K562 (cell line): ENCODE measurements at regions of chr1 and their contacts with region 1.

Region 1: DNA sequence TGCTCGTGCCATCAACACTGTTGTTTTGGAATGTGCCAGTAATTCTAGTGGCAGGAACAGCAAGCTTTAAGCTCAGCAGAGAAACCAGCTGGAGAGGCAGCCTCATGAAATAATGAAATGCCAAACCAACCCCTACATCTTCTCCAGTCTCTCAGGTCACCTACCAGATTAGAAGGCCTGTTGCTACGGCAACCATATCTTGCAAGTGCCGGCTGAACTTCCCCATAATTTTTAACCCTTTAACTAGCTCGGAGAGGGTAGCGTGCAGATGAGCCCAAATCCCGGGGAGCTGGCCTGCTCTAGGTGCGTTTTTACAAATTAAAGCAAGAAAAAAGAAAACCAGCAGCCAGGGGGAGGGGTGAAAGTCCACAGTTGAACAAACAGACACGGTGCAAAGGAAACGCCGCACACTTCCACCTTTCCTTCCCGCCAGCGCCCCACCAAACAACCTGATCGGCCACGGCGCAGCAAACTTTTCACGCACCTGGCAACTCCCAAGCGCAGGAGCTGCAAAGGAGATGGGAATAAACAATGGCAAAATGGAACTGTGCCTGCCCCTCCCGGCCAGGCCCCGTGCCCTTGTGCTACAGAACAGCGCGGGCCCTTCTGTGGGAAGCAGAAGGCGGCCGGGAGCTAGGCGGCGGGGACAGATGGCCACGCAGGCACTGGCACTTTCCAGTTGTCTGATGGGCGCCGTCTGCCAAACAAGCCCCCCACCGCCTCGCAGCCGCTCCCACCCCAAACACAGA is 50.1 kb downstream of the SSBP3 start:
- DNase-seq: peak in 3 of 4 experiments; percentile 54 to 90 (median 79)
- ATAC-seq: peak; percentile 84
- H3K4me3 ChIP-seq: peak overlapping the region; percentile 6; the same call in 1 of the 2 replicates
- H3K27ac ChIP-seq: peak overlapping the region; percentile 6; the same call in 1 of the 3 replicates
- H3K4me1 ChIP-seq: peaks cover 40 to 54% of the 10 kb centered on the region in 2 experiments
- H3K27me3 ChIP-seq: no peaks in the 10 kb centered on the region
- CTCF ChIP-seq: no peak
- EP300 ChIP-seq: 0 out of 2 replicates have a peak, but pooled peaks have one; percentile 12
- POLR2A ChIP-seq: no peak
- RAD21 ChIP-seq: no peak

Region 2: GRCh38 chr1:54172614-54173599 is 183.2 kb before region 1 on chr1:
- CTCF ChIA-PET with region 1: no interaction called
- POLR2A ChIA-PET with region 1: no interaction called
- in situ Hi-C with region 1: no loop called
- intact Hi-C with region 1: no loop called
- DNase-seq: no peak
- ATAC-seq: no peak
- H3K4me3 ChIP-seq: no peak overlapping the region
- H3K27ac ChIP-seq: no peak overlapping the region
- H3K4me1 ChIP-seq: no peaks in the 10 kb centered on the region; a peak in 1 of 5 replicates
- H3K27me3 ChIP-seq: no peaks in the 10 kb centered on the region
- CTCF ChIP-seq: no peak
- EP300 ChIP-seq: no peak
- POLR2A ChIP-seq: no peak
- RAD21 ChIP-seq: no peak

Region 3: DNA sequence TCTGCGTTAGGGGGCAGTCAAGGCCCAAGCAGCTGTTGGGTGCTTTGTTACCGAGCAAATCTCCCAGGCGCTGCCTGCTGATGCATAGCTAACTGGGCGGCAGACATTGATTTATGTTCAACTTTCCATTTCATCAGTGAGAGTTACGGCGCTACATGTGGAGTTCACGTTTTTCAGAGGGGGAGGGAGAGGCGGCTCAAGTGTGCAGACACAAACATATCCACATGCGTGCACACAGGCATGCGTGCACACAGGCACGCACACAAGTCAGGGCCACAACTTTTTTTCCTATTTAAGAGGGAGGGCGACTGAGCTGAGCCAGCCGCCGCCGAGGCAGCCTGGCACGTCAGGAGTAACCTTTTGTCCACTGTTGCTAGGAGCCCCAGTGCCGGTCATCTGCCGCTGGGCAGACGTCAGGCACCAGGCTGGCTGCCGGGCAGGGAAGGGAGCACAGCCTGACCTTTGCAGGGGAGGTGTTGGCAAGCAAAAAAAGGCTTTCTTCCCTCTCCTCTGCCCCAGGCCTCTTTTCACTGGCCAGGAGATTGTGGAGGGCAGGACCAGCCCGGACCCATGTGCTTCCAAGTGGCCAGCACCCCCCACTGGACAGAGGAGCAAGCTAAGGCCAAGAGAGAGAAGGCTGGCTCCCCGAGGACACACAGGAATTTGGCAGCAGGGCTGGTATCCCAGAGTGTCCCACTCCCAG is 82.9 kb before region 1 on chr1:
- CTCF ChIA-PET with region 1: no interaction called
- POLR2A ChIA-PET with region 1: no interaction called
- in situ Hi-C with region 1: no loop called
- intact Hi-C with region 1: loop called (anchors 5 kb)
- DNase-seq: peak; percentile 69 to 88 (median 77)
- ATAC-seq: peak; percentile 88
- H3K4me3 ChIP-seq: no peak overlapping the region; the same call in 1 of the 2 replicates
- H3K27ac ChIP-seq: peak overlapping the region; percentile 71
- H3K4me1 ChIP-seq: peaks cover 43 to 44% of the 10 kb centered on the region in 2 experiments
- H3K27me3 ChIP-seq: no peaks in the 10 kb centered on the region
- CTCF ChIP-seq: peak; percentile 73 to 83 (median 81); a peak in 5 of 6 replicates
- EP300 ChIP-seq: no peak; the same call in 1 of the 2 replicates
- POLR2A ChIP-seq: no peak
- RAD21 ChIP-seq: peak; percentile 76 to 94

Region 4: DNA sequence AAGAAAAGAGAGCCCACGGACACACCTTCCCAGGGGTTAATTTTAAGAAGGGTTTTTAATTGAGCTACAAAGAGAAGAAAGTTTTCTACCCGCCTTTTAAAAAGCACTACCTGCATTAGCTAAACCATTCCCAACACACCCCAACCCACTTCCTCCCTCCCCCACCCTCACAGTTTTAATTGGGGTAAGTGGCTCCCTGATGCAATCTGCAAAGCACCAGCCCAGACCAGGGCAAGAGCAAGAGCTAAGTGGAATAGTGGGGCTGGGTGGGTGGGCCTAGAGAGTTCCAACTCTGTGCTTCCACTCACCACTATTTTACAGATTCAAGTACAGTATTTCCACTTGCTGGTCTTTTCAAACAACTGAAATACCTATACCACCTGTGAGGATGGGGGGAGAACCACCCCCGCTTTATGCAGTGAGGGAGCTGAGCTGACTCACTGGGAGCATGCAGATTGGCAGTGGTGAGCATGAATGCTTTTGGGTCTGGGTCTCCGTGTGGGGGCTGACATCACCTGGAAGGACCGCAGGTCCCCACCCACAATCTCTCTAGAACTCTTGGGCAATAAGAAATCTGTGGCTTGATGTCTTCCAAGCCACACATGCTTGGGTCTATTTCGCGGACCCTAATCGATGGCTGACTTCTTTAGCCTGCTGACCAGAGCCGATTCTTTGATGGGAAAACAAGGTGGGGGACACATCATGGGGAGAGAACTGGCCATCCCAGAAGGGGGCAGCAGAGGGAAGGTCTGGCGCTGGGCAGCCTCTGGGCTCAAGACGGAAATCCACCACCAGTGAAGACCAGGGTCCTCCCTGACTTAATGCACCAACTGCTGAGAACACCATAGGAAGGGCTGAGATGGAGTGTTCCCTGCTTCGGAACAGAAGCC is 45.4 kb before region 1 on chr1:
- CTCF ChIA-PET with region 1: no interaction called
- POLR2A ChIA-PET with region 1: no interaction called
- in situ Hi-C with region 1: no loop called
- intact Hi-C with region 1: loop called (anchors 5 kb)
- DNase-seq: peak; percentile 66 to 79 (median 74)
- ATAC-seq: peak; percentile 89
- H3K4me3 ChIP-seq: no peak overlapping the region
- H3K27ac ChIP-seq: no peak overlapping the region
- H3K4me1 ChIP-seq: peaks cover 22 to 33% of the 10 kb centered on the region in 2 experiments
- H3K27me3 ChIP-seq: no peaks in the 10 kb centered on the region
- CTCF ChIP-seq: peak; percentile 77 to 81 (median 79)
- EP300 ChIP-seq: no peak
- POLR2A ChIP-seq: no peak
- RAD21 ChIP-seq: peak; percentile 73 to 90

Region 5: DNA sequence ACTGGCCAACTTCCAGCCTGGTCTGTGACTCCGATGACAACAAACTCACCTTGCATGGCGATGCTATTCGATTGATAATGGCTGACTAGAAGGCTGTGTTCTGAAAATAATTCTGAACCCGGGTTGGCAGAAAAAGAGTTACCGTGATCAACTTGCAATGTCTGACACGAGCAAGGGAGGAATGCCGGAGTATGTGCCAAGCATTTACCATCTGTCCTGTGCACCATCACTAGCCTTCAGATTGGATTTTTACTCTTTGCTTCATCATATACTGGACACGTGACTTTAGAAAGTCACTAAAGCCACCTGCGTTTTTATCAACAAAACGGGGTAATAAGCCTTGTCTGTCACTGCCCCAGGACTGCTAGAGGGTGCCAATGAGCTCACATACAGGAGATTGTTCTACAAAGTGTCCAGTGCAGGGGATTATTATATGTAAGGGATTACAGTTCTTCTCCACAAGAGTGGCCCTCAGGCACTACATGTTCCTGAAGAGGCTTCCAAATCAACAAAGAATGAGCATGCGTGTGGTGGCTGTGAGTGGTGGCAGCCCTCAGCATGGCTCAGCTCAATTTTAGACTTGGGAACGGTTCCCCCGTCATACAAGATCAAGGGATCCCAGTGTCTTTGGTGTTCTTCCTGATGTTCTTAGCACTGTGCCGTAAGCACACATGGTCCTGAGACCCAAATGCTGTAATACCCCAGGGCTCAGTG is 14.3 kb after region 1 on chr1:
- CTCF ChIA-PET with region 1: no interaction called
- POLR2A ChIA-PET with region 1: interaction called, 16 read pairs
- in situ Hi-C with region 1: no loop called
- intact Hi-C with region 1: no loop called
- DNase-seq: no peak
- ATAC-seq: no peak
- H3K4me3 ChIP-seq: no peak overlapping the region
- H3K27ac ChIP-seq: no peak overlapping the region
- H3K4me1 ChIP-seq: peaks cover 25 to 34% of the 10 kb centered on the region in 2 experiments
- H3K27me3 ChIP-seq: no peaks in the 10 kb centered on the region
- CTCF ChIP-seq: no peak
- EP300 ChIP-seq: no peak
- POLR2A ChIP-seq: no peak
- RAD21 ChIP-seq: no peak